ENCODE measurements at regions of chrX and their contacts with region 1.

Region 1: DNA sequence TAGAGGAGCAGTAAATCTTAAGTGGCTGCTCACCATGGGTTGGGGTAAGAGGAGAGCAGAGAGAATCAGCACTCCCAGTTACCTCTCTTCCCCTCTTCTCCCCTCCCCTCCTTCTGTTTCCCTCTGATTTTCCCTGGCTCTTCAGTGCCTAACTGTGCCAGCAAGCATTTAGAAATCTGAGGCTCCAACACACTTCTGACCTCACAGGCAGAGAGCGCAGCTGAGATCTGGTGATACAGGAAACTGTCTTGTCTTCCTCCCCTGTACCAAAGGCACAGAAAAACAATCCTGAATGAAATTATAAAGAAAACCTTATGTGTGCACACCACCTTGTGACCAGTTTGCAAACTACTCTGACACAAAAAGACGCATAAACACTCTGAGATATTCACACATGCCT is 82.4 kb upstream of the SMIM10 start:
- DNase-seq: no peak
- ATAC-seq: peak; percentile 60
- H3K4me3 ChIP-seq: no peak overlapping the region
- H3K27ac ChIP-seq: peak overlapping the region; percentile 27
- H3K4me1 ChIP-seq: peaks cover 39 to 84% of the 10 kb centered on the region in 2 experiments
- H3K27me3 ChIP-seq: no peaks in the 10 kb centered on the region
- CTCF ChIP-seq: peak in 2 of 3 experiments; percentile 9 to 41; a peak in 2 of 6 replicates
- POLR2A ChIP-seq: no peak
- RAD21 ChIP-seq: no peak

Region 2: GRCh38 chrX:134423615-134424014 is 484.7 kb before region 1 on chrX:
- CTCF ChIA-PET with region 1: no interaction called
- POLR2A ChIA-PET with region 1: no interaction called
- RAD21 ChIA-PET with region 1: no interaction called
- intact Hi-C with region 1: loop called (anchors 5 kb)
- DNase-seq: no peak
- ATAC-seq: peak; percentile 46
- H3K4me3 ChIP-seq: no peak overlapping the region
- H3K27ac ChIP-seq: no peak overlapping the region
- H3K4me1 ChIP-seq: no peaks in the 10 kb centered on the region
- H3K27me3 ChIP-seq: no peaks in the 10 kb centered on the region
- CTCF ChIP-seq: peak; percentile 15 to 44 (median 18); a peak in 4 of 6 replicates
- POLR2A ChIP-seq: no peak
- RAD21 ChIP-seq: peak; percentile 56; the same call in 1 of the 2 replicates

Region 3: GRCh38 chrX:136325377-136325776 is 1417.0 kb after region 1 on chrX:
- CTCF ChIA-PET with region 1: no interaction called
- POLR2A ChIA-PET with region 1: no interaction called
- RAD21 ChIA-PET with region 1: no interaction called
- intact Hi-C with region 1: no loop called
- DNase-seq: no peak
- ATAC-seq: no peak
- H3K4me3 ChIP-seq: no peak overlapping the region
- H3K27ac ChIP-seq: no peak overlapping the region
- H3K4me1 ChIP-seq: no peaks in the 10 kb centered on the region
- H3K27me3 ChIP-seq: no peaks in the 10 kb centered on the region
- CTCF ChIP-seq: no peak
- POLR2A ChIP-seq: no peak
- RAD21 ChIP-seq: no peak

Measured in HCT116 (cell line).